Activated naive CD4-positive, alpha-beta T cell treated with anti-CD3 and anti-CD28 coated beads for 36 hours (primary cell): ENCODE measurements at regions of chr11 and their contacts with region 1.

Region 1: DNA sequence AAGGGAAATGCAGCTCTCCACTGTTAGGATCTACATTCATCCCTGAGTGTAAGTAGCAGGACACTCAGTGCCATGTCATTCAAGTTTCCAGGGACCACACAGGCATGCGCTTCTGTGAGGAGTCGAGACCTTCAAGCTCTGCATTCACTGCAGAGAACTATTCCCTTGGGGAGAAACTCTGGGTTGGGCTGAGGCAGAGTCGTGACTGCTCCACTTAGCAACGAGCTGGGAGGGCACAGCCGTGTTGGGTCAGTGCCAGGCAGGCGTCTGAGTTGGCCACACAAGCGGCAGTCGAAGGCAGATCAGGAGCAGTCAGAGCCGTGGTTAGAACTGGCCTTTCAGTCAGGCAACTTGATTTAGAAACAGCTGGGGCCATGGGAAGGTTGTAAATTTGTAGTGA is 14.7 kb downstream of the MPEG1 start:
- DNase-seq: no peak
- H3K4me3 Mint-ChIP-seq: no peak overlapping the region
- H3K27ac Mint-ChIP-seq: no peak overlapping the region
- H3K4me1 Mint-ChIP-seq: peaks cover 15% of the 10 kb centered on the region
- H3K27me3 Mint-ChIP-seq: peaks cover 17% of the 10 kb centered on the region

Region 2: GRCh38 chr11:58999291-58999680 is 198.7 kb before region 1 on chr11:
- CTCF ChIA-PET with region 1: no interaction called
- intact Hi-C with region 1: no loop called
- DNase-seq: no peak
- H3K4me3 Mint-ChIP-seq: no peak overlapping the region
- H3K27ac Mint-ChIP-seq: no peak overlapping the region
- H3K4me1 Mint-ChIP-seq: no peaks in the 10 kb centered on the region
- H3K27me3 Mint-ChIP-seq: no peaks in the 10 kb centered on the region

Region 3: GRCh38 chr11:59186130-59186594 is 11.8 kb before region 1 on chr11:
- CTCF ChIA-PET with region 1: interaction called, 20 read pairs
- intact Hi-C with region 1: no loop called
- DNase-seq: peak; percentile 60
- H3K4me3 Mint-ChIP-seq: no peak overlapping the region
- H3K27ac Mint-ChIP-seq: no peak overlapping the region
- H3K4me1 Mint-ChIP-seq: no peaks in the 10 kb centered on the region
- H3K27me3 Mint-ChIP-seq: no peaks in the 10 kb centered on the region

Region 4: GRCh38 chr11:59207988-59208451 is 10.0 kb after region 1 on chr11:
- CTCF ChIA-PET with region 1: interaction called, 5 read pairs
- intact Hi-C with region 1: loop called (anchors 1 kb)
- DNase-seq: peak; percentile 53
- H3K4me3 Mint-ChIP-seq: no peak overlapping the region
- H3K27ac Mint-ChIP-seq: no peak overlapping the region
- H3K4me1 Mint-ChIP-seq: peaks cover 35% of the 10 kb centered on the region
- H3K27me3 Mint-ChIP-seq: peaks cover 26% of the 10 kb centered on the region

Region 5: GRCh38 chr11:59216641-59217564 is 18.9 kb after region 1 on chr11:
- CTCF ChIA-PET with region 1: interaction called, 5 read pairs
- intact Hi-C with region 1: loop called (anchors 1 kb)
- DNase-seq: peak; percentile 62
- H3K4me3 Mint-ChIP-seq: no peak overlapping the region
- H3K27ac Mint-ChIP-seq: no peak overlapping the region
- H3K4me1 Mint-ChIP-seq: peaks cover 15% of the 10 kb centered on the region
- H3K27me3 Mint-ChIP-seq: peaks cover 18% of the 10 kb centered on the region

Region 6: GRCh38 chr11:59401262-59401552 is 203.2 kb after region 1 on chr11:
- CTCF ChIA-PET with region 1: no interaction called
- intact Hi-C with region 1: no loop called
- DNase-seq: no peak
- H3K4me3 Mint-ChIP-seq: no peak overlapping the region
- H3K27ac Mint-ChIP-seq: no peak overlapping the region
- H3K4me1 Mint-ChIP-seq: no peaks in the 10 kb centered on the region
- H3K27me3 Mint-ChIP-seq: peaks cover 14% of the 10 kb centered on the region